GM10248 (cell line): ENCODE measurements at regions of chr13 and their contacts with region 1.

Region 1: GRCh38 chr13:26186118-26186870 is 35.8 kb downstream of the RNF6 start:
- DNase-seq: peak; percentile 87
- CTCF ChIP-seq: peak; percentile 63

Region 2: DNA sequence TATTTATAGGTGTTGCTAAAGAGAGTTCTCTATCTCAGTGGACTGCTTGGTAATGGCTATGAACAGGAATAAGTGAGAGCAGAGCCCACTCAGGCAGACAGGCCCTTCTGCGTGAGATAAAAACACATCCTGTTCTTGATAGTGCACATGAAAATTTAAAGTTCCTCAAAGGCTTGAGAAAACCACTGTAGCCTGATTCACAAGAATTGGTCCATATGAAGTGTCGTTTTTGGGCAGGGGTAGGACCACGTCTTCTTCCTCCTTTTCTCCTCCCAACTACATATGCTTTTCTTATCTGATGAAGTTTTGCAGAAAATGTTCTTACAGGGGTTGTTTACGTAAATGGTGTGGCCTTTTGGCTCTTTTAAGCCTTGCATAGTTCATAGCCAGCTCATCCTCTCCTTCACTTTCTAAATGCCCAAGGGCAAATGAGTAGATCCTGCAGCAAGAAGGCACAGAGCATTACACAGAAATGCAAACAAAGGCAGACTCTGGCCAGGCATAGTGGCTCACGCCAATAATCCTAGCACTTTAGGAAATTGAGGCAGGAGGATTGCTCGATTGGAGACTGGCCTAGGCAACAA is 18.0 kb before region 1 on chr13:
- CTCF ChIA-PET with region 1: interaction called, 19 read pairs
- POLR2A ChIA-PET with region 1: no interaction called
- DNase-seq: no peak
- CTCF ChIP-seq: no peak

Region 3: GRCh38 chr13:26216042-26216441 is 29.7 kb after region 1 on chr13:
- CTCF ChIA-PET with region 1: interaction called, 28 read pairs
- POLR2A ChIA-PET with region 1: no interaction called
- DNase-seq: no peak
- CTCF ChIP-seq: no peak

Region 4: DNA sequence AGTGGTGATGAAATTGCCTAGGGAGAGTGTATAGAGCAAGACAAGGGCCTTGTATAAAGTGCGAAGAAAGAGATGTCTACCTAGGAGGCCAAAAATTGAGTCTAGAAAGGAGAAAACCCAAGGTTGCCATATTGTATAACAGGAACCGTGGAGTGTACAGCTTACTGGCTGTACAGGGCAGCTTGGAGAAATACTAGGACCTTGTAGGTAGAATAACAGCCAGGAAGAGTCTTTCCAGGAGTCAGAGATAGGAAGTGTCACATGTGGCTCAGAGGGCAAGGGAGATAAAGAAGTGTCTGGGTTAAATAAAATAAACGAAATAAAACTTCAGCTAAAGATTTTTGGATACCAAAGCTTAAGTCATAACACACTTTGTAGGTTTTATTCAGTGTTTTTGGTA is 80.0 kb after region 1 on chr13:
- CTCF ChIA-PET with region 1: interaction called, 10 read pairs
- POLR2A ChIA-PET with region 1: no interaction called
- DNase-seq: no peak
- CTCF ChIP-seq: no peak

Region 5: DNA sequence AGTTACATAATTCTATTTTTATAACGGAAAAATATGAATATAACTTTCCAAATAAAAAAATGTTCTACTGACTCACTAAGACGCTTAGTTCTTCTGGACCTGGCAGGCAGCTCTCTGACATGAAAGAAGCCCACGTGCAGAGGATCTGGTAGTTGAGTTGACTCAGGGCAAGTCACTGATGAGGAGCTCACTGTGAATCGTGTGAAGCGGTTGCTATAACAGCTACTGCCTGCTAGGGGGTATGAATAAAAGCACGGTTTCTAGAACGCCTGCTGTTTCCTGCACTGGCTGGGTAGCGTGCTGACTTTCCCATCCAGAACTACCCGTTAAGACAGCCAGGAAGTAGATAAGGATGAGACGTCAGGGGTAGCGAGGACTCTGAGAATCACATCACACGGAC is 316.5 kb after region 1 on chr13:
- CTCF ChIA-PET with region 1: interaction called, 193 read pairs
- POLR2A ChIA-PET with region 1: no interaction called
- DNase-seq: no peak
- CTCF ChIP-seq: no peak

Region 6: GRCh38 chr13:26872525-26873385 is 686.5 kb after region 1 on chr13:
- CTCF ChIA-PET with region 1: interaction called, 10 read pairs
- POLR2A ChIA-PET with region 1: no interaction called
- DNase-seq: peak; percentile 50
- CTCF ChIP-seq: peak; percentile 69